MCF 10A (cell line): ENCODE measurements at regions of chr9 and their contacts with region 1.

Region 1: GRCh38 chr9:135500525-135501358 is at the start of gene MRPS2:
- DNase-seq: peak; percentile 82
- H3K4me3 Mint-ChIP-seq: peak within 1 kb of the TSS; percentile 80
- H3K27ac Mint-ChIP-seq: peak within 1 kb of the TSS; percentile 95
- H3K4me1 Mint-ChIP-seq: no peaks in the 10 kb centered on the region
- H3K27me3 Mint-ChIP-seq: no peaks in the 10 kb centered on the region
- CTCF ChIP-seq: peak; percentile 75
- total RNA-seq, gene MRPS2: 35.4 and 45.8 TPM in 2 replicates

Region 2: GRCh38 chr9:135480071-135480941 is 20.4 kb before region 1 on chr9:
- CTCF ChIA-PET with region 1: interaction called, 7 read pairs
- POLR2A ChIA-PET with region 1: interaction called, 14 read pairs
- intact Hi-C with region 1: no loop called
- DNase-seq: peak; percentile 40
- H3K4me3 Mint-ChIP-seq: peak overlapping the region; percentile 68
- H3K27ac Mint-ChIP-seq: no peak overlapping the region
- H3K4me1 Mint-ChIP-seq: no peaks in the 10 kb centered on the region
- H3K27me3 Mint-ChIP-seq: no peaks in the 10 kb centered on the region
- CTCF ChIP-seq: no peak